ENCODE measurements at regions of chr1 and their contacts with region 1.

Region 1: GRCh38 chr1:107277022-107277421 is 136.2 kb downstream of the NTNG1 start:
- DNase-seq: peak; percentile 36
- ATAC-seq: peak; percentile 64
- H3K4me3 ChIP-seq: no peak overlapping the region
- H3K27ac ChIP-seq: no peak overlapping the region
- H3K4me1 ChIP-seq: no peaks in the 10 kb centered on the region
- H3K27me3 ChIP-seq: no peaks in the 10 kb centered on the region
- CTCF ChIP-seq: peak; percentile 30
- POLR2A ChIP-seq: no peak
- RAD21 ChIP-seq: no peak; the same call in 1 of the 2 replicates

Region 2: GRCh38 chr1:107529502-107530149 is 252.6 kb after region 1 on chr1:
- CTCF ChIA-PET with region 1: no interaction called
- POLR2A ChIA-PET with region 1: no interaction called
- dilution Hi-C with region 1: no loop called
- in situ Hi-C with region 1: no loop called
- intact Hi-C with region 1: loop called (anchors 2 kb)
- DNase-seq: peak; percentile 35
- ATAC-seq: peak; percentile 91
- H3K4me3 ChIP-seq: no peak overlapping the region
- H3K27ac ChIP-seq: no peak overlapping the region
- H3K4me1 ChIP-seq: no peaks in the 10 kb centered on the region
- H3K27me3 ChIP-seq: no peaks in the 10 kb centered on the region
- CTCF ChIP-seq: peak; percentile 49
- POLR2A ChIP-seq: no peak
- RAD21 ChIP-seq: peak; percentile 42